ENCODE measurements at regions of chr12 and their contacts with region 1.

Region 1: DNA sequence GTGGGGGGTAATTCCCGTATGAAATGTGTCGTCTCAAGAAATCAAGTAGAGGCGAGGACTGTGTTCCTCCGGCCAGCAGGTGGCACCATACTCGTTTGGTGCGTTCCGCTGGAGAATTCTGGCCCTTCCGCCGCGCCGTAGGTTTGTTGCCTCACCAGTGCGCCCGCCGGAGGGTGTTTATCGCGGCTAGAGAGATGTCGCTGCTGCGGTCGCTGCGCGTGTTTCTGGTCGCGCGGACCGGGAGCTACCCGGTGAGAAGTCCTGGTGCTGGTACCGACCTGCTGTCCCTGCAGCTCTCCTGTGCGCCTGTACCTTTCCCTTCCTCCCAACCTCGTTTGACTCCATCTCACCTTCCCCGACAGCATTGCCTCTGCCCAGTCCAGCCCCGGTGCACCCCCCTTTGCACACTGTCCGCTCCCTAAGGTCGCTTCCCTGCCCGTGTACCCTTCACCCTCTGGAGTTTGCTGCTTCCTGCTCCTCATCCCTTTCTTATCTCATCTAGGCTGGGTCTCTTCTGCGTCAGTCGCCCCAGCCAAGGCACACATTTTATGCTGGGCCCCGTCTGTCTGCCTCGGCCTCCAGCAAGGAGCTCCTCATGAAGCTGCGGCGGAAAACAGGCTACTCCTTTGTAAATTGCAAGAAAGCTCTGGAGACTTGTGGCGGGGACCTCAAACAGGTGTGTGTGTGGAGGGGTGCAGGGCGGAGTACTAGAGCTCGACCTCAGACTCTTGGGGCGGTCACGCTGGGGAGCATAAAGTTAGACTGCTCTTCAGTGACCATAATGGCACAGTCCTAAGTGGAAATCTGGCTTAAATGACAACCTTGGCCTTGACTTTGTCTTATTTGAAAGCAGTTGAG is at the start of gene TSFM:
- DNase-seq: peak; percentile 97
- H3K4me3 Mint-ChIP-seq: peak within 1 kb of the TSS; percentile 99
- H3K27ac Mint-ChIP-seq: peak within 1 kb of the TSS; percentile 87
- H3K4me1 Mint-ChIP-seq: peaks cover 47% of the 10 kb centered on the region
- H3K27me3 Mint-ChIP-seq: no peaks in the 10 kb centered on the region
- total RNA-seq, gene TSFM: 28.9 to 31.5 TPM

Region 2: DNA sequence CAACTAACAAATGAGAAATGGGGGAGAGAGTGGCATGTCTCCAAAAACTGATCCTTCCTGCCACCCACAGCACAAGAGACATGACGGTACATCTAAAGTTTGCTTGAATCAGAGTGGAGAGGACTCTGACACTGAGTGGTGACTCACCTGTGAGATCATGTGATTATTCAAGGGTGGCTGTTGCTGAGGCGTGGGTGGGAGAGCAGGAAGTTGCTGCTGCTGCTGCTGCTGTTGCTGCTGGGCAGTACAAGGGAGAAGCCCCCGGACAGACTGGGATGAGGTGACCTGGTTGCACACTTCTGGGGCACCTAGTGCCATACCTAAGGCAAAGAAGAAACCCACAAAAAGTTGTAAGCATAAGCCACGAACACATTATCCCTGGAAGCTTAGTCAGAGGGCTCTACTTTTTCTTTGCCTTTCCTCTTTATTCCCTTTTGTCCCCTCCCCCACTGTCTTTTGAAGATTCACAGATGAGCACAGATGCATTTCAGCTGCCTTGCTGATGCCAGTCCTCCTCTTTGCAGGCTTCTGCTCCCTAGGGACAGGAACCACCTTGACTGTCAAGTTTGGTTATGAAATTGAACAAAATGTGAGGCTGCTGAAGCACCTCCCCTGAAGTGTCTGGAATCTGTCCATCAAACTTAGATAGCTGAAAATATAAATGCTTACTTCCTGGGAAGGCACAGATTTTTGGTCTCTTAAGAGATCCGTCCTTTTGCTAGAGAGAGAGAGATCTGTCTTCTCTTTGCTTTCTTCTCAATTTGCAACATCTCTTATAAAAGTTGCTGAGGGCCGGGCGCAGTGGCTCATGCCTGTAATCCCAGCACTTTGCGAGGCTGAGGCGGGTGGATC is 502.4 kb before region 1 on chr12:
- CTCF ChIA-PET with region 1: no interaction called
- POLR2A ChIA-PET with region 1: no interaction called
- DNase-seq: peak; percentile 76
- H3K4me3 Mint-ChIP-seq: peak overlapping the region; percentile 24
- H3K27ac Mint-ChIP-seq: peak overlapping the region; percentile 86
- H3K4me1 Mint-ChIP-seq: peaks cover 21% of the 10 kb centered on the region
- H3K27me3 Mint-ChIP-seq: no peaks in the 10 kb centered on the region

Region 3: GRCh38 chr12:57674691-57675090 is 108.1 kb before region 1 on chr12:
- CTCF ChIA-PET with region 1: no interaction called
- POLR2A ChIA-PET with region 1: no interaction called
- DNase-seq: no peak
- H3K4me3 Mint-ChIP-seq: no peak overlapping the region
- H3K27ac Mint-ChIP-seq: no peak overlapping the region
- H3K4me1 Mint-ChIP-seq: no peaks in the 10 kb centered on the region
- H3K27me3 Mint-ChIP-seq: peaks cover 9% of the 10 kb centered on the region

Region 4: DNA sequence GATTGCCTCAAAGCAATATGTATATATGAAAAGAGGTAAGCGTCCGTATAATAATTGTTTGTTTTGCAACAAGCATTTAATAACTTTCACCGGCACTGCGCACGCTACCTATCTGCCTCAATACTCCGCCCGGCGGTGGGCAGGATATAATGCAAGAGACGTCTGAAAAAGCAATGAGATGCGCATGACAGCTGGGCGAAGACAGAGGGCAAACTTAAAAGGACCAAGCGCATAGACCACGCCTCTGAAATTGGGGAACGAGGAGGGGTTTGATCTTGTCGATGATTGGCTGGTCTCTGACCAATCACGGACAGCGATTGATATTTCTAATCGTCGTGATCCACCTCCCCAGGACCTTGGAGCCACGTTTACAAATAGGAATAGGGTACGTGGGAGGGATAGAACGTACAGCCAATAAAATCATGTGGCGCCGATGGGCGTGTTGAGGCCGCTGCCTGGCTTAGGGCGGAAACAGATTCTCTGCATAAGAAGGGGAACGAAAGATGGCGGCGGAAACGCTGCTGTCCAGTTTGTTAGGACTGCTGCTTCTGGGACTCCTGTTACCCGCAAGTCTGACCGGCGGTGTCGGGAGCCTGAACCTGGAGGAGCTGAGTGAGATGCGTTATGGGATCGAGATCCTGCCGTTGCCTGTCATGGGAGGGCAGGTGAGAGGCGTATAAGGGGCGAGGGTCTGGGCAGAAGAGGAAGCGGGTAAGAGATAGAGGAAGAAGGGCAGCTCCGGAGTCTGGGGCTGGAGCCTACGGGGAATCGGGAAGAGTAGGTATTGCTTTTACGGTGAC is 89.0 kb before region 1 on chr12 and contains the start of gene OS9:
- CTCF ChIA-PET with region 1: no interaction called
- POLR2A ChIA-PET with region 1: no interaction called
- DNase-seq: peak; percentile 96
- H3K4me3 Mint-ChIP-seq: no peak within 1 kb of the TSS
- H3K27ac Mint-ChIP-seq: no peak within 1 kb of the TSS
- H3K4me1 Mint-ChIP-seq: peaks cover 7% of the 10 kb centered on the region
- H3K27me3 Mint-ChIP-seq: peaks cover 13% of the 10 kb centered on the region
- total RNA-seq, gene OS9: 146 to 152 TPM

Region 5: DNA sequence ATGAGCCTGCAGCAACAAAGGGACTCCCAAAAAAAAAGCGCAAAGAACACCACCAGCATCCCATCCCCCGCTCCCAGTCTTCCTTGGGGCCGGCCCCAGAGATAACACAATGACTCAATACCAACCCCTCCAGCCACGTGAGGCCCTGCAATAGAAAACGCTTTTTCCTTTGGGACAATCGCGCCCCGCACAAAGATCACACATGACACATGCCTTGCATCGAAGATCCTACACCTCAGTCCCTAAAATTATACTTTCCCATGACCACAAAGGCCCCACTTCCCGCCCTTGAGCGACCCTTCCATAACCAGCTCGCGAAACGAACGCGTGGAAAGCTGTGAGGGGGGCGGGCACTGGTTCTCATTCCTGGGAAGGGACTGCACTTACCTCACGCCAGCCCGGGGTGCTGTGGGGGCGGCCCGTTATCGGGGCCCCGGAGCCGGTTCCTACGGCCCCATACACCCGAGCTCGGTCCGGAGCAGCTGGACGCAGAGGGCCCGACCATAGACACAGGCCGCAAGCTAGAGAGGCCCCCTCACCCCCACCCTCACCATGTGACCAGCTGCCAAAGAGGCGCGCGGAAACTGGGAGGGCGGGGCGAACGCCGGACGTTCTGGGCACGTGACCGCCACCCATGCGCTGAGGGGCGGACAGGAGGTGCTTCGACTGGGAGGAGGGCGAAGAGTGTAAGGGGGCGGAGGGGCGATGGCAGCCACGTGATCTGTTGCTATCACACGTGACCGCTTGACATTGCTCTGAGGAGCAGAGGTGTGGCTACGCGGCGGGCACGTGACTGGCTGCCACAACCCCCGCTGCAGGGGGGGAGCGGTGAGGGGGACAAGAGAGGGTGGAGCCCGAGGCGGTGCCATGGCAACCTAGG is 30.8 kb before region 1 on chr12 and contains the start of gene CDK4:
- CTCF ChIA-PET with region 1: interaction called, 39 read pairs
- POLR2A ChIA-PET with region 1: interaction called, 13 read pairs
- DNase-seq: peak; percentile 99
- H3K4me3 Mint-ChIP-seq: peak within 1 kb of the TSS; percentile 95
- H3K27ac Mint-ChIP-seq: peak within 1 kb of the TSS; percentile 74
- H3K4me1 Mint-ChIP-seq: peaks cover 58% of the 10 kb centered on the region
- H3K27me3 Mint-ChIP-seq: peaks cover 3% of the 10 kb centered on the region
- total RNA-seq, gene CDK4: 87.7 to 88.6 TPM

Region 6: DNA sequence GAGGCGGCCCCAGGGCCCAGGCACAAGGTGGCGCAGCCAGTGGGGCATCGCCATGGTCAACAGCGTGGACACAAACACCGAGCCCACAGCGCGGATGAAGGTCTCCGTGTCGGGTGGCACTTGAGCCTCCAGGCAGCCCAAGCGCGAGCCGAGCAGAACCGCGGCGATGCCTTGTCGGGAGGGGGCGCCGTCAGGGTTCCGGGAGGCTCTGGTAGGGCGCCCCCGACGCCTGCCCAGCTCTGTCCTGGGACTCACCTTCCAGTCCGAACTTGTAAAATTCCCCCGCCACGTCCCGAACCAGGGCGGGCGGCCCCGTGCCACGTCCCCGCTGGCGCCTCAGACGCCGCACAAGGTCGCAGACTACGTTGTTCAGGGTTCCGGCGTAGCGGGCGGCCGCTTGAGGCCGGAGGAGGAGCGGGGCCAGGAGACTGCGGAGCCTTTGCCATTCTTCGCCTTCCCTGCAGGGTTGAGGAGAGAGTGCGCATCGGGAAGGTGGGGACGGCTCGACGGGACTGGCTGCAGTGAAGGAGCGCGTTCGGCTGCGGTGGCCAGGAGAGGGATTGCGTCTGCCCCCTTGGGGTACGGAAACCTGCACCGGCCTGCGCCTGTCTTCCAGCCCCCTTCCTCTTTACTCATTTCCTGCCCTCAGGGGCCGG is 17.7 kb before region 1 on chr12:
- CTCF ChIA-PET with region 1: interaction called, 32 read pairs
- POLR2A ChIA-PET with region 1: interaction called, 15 read pairs
- DNase-seq: peak; percentile 67
- H3K4me3 Mint-ChIP-seq: peak overlapping the region; percentile 85
- H3K27ac Mint-ChIP-seq: peak overlapping the region; percentile 50
- H3K4me1 Mint-ChIP-seq: peaks cover 34% of the 10 kb centered on the region
- H3K27me3 Mint-ChIP-seq: peaks cover 12% of the 10 kb centered on the region

Region 7: GRCh38 chr12:57771708-57772428 is 11.0 kb before region 1 on chr12 and contains the start of gene METTL1:
- CTCF ChIA-PET with region 1: interaction called, 32 read pairs
- POLR2A ChIA-PET with region 1: interaction called, 15 read pairs
- DNase-seq: peak; percentile 95
- H3K4me3 Mint-ChIP-seq: peak within 1 kb of the TSS; percentile 92
- H3K27ac Mint-ChIP-seq: peak within 1 kb of the TSS; percentile 90
- H3K4me1 Mint-ChIP-seq: peaks cover 25% of the 10 kb centered on the region
- H3K27me3 Mint-ChIP-seq: no peaks in the 10 kb centered on the region
- total RNA-seq, gene METTL1: 12.5 to 13.8 TPM

Region 8: GRCh38 chr12:57793920-57794319 is 11.1 kb after region 1 on chr12:
- CTCF ChIA-PET with region 1: interaction called, 9 read pairs
- POLR2A ChIA-PET with region 1: interaction called, 11 read pairs
- DNase-seq: no peak
- H3K4me3 Mint-ChIP-seq: no peak overlapping the region
- H3K27ac Mint-ChIP-seq: no peak overlapping the region
- H3K4me1 Mint-ChIP-seq: peaks cover 7% of the 10 kb centered on the region
- H3K27me3 Mint-ChIP-seq: no peaks in the 10 kb centered on the region

Region 9: GRCh38 chr12:57836442-57837375 is 53.9 kb after region 1 on chr12:
- CTCF ChIA-PET with region 1: interaction called, 3 read pairs
- POLR2A ChIA-PET with region 1: interaction called, 15 read pairs
- DNase-seq: peak; percentile 43
- H3K4me3 Mint-ChIP-seq: peak overlapping the region; percentile 21
- H3K27ac Mint-ChIP-seq: peak overlapping the region; percentile 79
- H3K4me1 Mint-ChIP-seq: peaks cover 86% of the 10 kb centered on the region
- H3K27me3 Mint-ChIP-seq: no peaks in the 10 kb centered on the region

Region 10: GRCh38 chr12:57929092-57929830 is 146.4 kb after region 1 on chr12:
- CTCF ChIA-PET with region 1: no interaction called
- POLR2A ChIA-PET with region 1: no interaction called
- DNase-seq: no peak
- H3K4me3 Mint-ChIP-seq: no peak overlapping the region
- H3K27ac Mint-ChIP-seq: no peak overlapping the region
- H3K4me1 Mint-ChIP-seq: peaks cover 1% of the 10 kb centered on the region
- H3K27me3 Mint-ChIP-seq: no peaks in the 10 kb centered on the region